ENCODE measurements at regions of chr7 and their contacts with region 1.

Region 1: DNA sequence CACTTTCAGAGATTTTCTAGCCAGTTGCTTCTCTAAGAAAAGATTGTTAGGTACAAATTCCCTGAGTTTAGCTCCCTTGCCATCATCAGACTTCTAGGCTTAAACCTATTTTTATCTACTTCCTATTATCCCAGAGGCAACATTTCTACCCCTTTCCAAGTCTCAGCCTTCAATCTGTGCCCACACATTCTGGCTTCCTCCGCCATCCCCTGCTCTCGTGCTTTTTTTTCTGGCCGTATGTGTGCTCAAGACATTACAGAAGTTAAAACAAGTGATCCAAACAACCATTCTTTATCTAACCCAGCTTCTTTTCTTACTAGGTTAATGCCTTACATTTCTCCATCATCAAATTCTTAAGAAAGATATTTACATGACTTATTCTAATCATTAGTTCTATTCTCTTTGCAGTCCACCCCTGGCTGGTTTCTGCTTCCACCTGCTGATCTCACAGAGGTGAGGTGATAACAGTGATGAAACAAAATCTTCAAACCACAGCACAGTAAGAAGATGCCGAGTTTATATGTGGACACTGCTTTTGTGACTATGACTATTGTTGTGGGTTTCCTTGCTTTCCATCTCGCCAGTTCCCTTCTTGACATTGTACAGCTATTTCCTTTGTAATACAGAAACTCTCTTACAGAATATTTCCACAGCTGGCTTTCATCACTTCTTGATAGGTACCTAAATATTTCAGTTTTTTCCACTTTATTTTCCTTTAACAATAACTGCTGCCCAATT is 18.3 kb upstream of the CDK6 start:
- ATAC-seq: no peak
- H3K4me3 ChIP-seq: no peak overlapping the region
- H3K27ac ChIP-seq: no peak overlapping the region
- H3K4me1 ChIP-seq: peaks cover 0 to 2% of the 10 kb centered on the region in 2 donors

Region 2: DNA sequence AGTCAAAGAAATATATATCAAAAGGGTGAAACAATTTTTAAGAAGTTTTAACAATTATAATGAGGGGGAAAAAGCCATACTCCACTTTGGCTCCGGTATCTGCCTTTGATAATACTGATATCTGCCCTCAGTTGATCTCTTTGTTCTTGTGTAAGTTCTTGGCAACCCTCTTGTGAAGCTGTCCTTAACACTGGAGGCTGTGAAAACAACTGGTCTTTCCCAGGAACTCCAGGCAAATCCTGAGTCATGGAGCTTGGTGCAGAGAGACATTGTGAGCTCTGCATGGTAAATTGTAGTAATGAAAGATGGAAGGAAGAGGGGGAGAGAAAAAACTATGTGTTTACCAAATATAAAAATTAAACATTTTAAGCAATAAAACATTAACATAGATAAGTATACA is 365.0 kb before region 1 on chr7:
- in situ Hi-C with region 1: no loop called
- ATAC-seq: no peak
- H3K4me3 ChIP-seq: no peak overlapping the region
- H3K27ac ChIP-seq: no peak overlapping the region
- H3K4me1 ChIP-seq: no peaks in the 10 kb centered on the region

Region 3: DNA sequence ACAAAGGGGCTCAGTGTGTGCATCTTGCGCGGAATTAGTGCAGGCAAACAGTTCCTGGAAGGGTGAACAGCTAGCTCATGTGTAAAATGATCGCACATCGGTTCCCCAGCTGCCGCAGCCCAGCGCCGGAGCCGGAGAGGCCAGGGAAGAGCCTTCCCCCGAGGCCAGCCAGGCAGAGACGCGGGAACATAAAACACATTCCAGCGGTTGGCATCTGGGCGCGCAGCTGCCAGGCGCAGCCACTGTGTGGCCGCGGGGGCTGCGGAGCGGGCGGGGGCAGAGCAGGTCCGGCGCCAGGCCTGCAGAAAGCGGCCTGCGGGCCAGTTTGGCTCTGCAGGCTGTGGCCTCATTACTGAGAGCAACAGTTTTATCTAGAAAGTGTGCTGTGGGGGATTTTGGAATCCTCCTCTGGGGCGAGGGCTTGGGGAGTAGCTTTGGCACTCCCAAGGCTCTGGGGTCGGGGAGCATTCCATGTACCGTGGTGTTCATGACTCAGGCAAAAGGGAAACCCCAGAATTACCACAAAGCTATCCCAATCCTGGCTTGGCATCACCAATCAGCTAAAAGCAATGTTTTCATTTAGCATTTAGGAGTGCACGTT is 188.8 kb after region 1 on chr7:
- in situ Hi-C with region 1: loop called in 2 of 9 experiments (anchors 25 kb)
- ATAC-seq: peak; percentile 63 to 90 (median 74)
- H3K4me3 ChIP-seq: peak overlapping the region in 2 of 5 donors; percentile 9 to 13
- H3K27ac ChIP-seq: no peak overlapping the region
- H3K4me1 ChIP-seq: peaks cover 7 to 12% of the 10 kb centered on the region in 2 donors

Region 4: DNA sequence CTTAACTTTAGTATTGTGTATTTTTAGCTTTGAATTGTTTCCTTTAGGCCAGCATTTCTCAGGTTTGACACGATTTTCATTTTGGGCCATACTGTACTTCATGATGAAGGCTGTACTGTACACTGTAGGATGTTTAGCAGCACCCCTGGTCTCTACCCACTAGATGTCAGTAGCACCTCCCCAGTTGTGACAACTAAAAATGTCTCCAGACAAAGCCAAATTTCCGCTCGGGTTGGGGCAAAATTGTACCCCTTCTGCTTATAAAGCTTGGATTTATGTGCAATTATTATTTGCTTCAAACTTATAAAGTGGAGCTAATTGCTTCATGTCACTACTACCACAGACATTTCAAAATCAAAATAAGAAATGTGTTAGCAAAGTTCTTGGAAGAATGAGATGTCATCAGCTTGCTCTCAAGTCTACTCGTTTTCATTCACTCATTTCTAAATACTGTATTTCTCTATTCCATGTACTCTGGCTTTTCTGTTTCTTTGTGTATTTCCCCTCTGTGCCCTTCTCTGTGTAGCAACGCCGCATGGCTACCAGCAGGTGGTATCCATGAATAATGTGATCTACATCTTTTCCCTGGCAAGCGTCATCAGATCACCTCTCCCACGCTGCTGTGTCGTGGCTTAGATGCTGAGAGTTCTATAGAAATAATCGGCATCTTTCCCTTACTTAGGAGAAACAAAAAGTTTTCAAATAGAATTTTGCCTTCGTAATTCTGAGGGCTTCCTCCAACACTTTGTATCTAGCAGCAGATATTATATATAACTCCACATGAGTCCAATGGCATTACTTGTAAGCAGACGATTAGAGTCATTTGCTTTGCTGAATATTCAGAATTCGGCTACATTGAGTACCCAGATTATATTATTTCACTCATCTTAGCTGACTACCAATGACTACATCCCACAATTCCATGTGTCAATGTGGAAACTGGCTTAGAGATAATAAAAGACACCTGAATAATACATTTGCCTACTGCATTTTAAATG is 767.7 kb after region 1 on chr7:
- in situ Hi-C with region 1: no loop called
- ATAC-seq: peak; percentile 52 to 99 (median 82)
- H3K4me3 ChIP-seq: no peak overlapping the region
- H3K27ac ChIP-seq: no peak overlapping the region
- H3K4me1 ChIP-seq: no peaks in the 10 kb centered on the region